ENCODE measurements at regions of chr9 and their contacts with region 1.

Region 1: DNA sequence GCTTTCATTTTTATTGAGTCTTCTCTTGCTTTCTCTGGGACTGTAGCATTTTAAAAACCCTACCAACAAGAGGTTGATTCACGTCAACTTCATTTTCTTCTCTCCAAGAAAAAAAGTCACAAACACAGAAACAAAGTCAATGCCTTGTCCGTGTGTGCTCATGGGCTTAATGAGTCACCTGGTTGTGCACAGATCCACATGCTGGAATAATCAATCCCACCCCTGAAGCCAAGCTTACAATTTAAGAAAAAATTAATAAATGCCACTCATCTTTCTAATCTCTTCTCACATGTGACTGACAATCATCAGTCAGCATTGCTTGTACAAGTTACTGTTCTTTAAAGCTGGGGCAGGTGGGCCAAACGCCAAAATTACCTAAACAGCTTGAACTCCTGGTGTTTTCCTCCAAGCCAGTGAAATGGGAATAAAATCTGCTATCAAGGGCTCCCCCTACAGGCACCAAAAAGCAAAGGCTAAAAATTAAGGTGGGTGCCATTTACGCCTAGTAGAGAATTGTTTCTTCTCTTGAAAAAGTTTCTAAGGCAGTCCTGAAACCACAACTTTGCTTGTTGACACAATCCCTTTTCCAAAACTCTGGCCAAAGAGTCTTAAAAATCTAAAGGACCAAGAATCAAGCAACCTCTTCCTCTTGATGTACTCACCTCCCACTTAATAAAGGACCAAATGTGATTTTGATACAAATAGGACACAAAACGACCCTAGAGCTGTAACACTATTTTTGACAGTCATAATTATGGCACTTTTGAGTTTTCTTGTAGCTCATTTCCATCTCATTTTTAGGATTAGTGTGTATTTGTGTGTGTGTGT is 21.3 kb downstream of the TRMO start:
- DNase-seq: no peak

Region 2: DNA sequence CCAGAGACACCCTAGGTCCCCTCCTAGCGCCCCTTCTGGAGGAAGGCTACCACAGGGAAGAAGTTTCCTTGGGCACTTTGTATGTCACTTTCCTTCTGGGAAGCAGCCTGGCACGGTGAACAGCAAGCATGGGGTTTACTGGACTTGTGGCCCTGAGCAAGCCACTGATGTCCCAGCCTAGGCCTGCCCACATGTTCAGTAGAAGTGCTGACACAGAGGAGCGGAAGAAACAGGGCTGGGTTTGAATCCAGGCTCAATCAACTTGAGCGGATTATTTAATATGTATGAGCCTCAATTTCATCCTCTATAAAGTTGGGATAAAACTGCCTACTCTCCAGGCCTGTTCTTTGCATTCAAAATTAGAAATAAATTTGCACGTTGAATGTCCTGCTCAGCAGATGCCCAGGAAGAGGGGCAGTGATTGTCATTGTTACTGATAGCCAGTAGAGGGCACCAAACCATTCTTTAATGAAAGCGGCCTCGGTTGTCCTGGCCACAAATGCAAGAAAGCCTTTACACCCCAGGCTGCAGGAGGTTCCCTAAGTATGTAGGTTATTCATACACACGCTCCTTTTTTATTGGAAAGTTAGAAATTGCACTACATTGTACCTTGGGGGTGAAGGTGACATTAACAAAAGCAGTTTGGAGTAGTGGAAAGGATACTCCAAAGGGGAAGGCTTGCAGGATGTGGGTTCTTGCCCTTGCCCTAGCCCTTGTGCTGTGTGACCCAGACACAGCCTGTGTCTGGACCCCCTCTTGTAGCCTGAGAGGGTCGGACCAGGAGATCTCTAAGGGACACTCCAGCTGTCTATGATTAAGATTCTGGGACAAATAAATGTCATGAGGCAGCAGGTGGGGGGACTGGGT is 190.4 kb before region 1 on chr9:
- intact Hi-C with region 1: loop called (anchors 2 kb)
- DNase-seq: no peak